ENCODE measurements at regions of chr5 and their contacts with region 1.

Region 1: DNA sequence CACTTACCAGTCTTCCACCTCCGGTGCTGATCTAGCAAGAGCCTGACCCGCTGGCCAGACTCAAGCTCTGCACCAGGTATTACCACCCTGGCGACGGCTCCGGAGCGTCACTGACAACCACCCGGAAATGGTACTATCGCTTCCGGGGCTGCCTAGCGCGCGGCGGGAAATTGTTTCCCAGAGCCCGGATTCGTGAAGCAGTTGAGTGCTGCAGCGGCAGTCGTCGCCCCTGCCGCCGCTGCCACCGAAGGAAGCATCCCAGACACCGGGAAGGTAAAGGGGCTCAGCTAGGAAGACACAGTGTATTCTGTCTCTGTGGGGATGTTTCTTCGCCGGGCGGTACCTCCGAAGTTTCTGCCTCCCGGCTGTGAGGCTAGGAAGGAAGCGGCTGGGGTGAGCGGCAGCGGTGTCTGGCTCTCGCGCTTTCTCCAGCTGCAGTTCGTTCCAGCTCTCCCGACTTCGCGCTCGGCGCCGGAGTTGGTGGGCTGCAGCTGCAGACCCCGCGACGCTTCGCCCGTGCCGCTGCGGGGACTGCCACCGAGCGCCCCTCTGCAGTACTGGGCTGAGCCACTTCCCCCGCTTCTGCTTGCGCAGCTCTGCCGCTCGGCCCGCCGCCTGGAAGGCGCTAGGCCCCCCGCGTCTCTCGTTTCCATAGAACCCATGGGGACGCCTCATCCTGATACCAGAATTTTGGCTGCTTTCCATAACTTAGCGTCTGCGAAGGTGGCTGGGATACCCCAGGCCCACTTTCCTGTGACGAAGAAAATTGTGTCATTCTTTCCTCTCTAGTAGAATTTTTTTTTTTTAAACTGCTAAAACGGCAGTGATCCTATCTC is at the starts of genes KIAA0825 and SLF1:
- DNase-seq: peak; percentile 69 to 86 (median 83)
- ATAC-seq: peak; percentile 94
- H3K4me3 ChIP-seq: peak within 1 kb of the TSS; percentile 79
- H3K4me3 Mint-ChIP-seq: peak within 1 kb of the TSS; percentile 92 to 99 (median 96)
- H3K27ac ChIP-seq: peak within 1 kb of the TSS; percentile 63
- H3K27ac Mint-ChIP-seq: peak within 1 kb of the TSS; percentile 30 to 96 (median 89)
- H3K4me1 ChIP-seq: peaks cover 6 to 10% of the 10 kb centered on the region in 2 donors
- H3K4me1 Mint-ChIP-seq: peaks cover 18 to 47% (median 43%) of the 10 kb centered on the region in 7 donors
- H3K27me3 ChIP-seq: no peaks in the 10 kb centered on the region
- H3K27me3 Mint-ChIP-seq: no peaks in the 10 kb centered on the region
- total RNA-seq, gene KIAA0825: 1.2 to 3.2 (median 1.5) TPM
- total RNA-seq, gene SLF1: 6.7 to 13.4 (median 11.3) TPM

Region 2: DNA sequence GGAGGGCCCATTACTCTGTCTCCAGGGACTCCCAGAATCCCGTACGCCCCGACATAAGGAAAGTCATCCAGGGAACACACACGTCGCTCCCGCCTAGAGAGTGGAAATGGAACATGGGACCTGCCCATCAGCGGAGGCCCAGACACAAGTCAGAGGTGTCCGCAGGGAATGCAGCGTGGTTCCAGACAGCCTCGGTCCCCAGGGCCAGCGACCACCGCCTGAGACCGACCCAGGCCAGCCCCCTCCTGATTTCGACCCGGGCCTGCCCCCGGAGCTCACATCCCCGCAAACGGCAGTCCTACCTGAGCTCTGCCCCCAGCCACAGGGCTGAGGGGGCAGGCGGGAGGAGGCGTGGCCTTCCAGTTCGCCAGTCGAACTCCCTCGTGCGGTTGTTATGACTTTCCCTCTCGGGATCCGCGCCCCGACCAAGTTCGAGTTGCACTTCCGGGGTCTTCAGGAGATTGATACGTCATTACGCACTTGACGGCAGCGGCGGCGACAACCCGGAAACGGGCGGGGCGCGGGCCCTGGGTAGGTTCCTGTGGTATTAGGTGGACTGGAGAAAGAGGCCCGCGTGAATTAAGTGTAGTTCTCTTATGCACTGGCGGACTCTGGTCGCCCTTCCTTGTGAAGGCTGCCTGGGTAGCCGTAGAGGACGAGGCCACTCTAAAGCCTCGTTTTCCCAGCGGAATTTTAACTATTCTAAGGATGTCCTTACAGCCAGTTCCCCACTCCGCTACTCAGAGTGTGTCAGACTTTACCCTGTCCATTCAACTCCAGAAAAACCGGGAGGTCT is 507.3 kb before region 1 on chr5:
- CTCF ChIA-PET with region 1: no interaction called
- POLR2A ChIA-PET with region 1: no interaction called
- intact Hi-C with region 1: loop called (anchors 1 kb)
- DNase-seq: peak; percentile 77 to 93 (median 90)
- ATAC-seq: peak; percentile 96
- H3K4me3 ChIP-seq: peak overlapping the region; percentile 90
- H3K4me3 Mint-ChIP-seq: peak overlapping the region; percentile 88 to 97 (median 95)
- H3K27ac ChIP-seq: peak overlapping the region; percentile 85
- H3K27ac Mint-ChIP-seq: peak overlapping the region; percentile 93 to 97 (median 96)
- H3K4me1 ChIP-seq: peaks cover 8 to 10% of the 10 kb centered on the region in 2 donors
- H3K4me1 Mint-ChIP-seq: peaks cover 21 to 50% (median 47%) of the 10 kb centered on the region in 7 donors
- H3K27me3 ChIP-seq: no peaks in the 10 kb centered on the region
- H3K27me3 Mint-ChIP-seq: peaks cover 0 to 15% (median 14%) of the 10 kb centered on the region in 5 donors

Region 3: GRCh38 chr5:94153736-94154450 is 464.8 kb before region 1 on chr5:
- CTCF ChIA-PET with region 1: no interaction called
- POLR2A ChIA-PET with region 1: no interaction called
- intact Hi-C with region 1: no loop called
- DNase-seq: no peak
- ATAC-seq: no peak
- H3K4me3 ChIP-seq: no peak overlapping the region
- H3K4me3 Mint-ChIP-seq: no peak overlapping the region
- H3K27ac ChIP-seq: no peak overlapping the region
- H3K27ac Mint-ChIP-seq: no peak overlapping the region
- H3K4me1 ChIP-seq: no peaks in the 10 kb centered on the region
- H3K4me1 Mint-ChIP-seq: no peaks in the 10 kb centered on the region
- H3K27me3 ChIP-seq: no peaks in the 10 kb centered on the region
- H3K27me3 Mint-ChIP-seq: peaks cover 0 to 3% (median 0%) of the 10 kb centered on the region in 5 donors

Region 4: DNA sequence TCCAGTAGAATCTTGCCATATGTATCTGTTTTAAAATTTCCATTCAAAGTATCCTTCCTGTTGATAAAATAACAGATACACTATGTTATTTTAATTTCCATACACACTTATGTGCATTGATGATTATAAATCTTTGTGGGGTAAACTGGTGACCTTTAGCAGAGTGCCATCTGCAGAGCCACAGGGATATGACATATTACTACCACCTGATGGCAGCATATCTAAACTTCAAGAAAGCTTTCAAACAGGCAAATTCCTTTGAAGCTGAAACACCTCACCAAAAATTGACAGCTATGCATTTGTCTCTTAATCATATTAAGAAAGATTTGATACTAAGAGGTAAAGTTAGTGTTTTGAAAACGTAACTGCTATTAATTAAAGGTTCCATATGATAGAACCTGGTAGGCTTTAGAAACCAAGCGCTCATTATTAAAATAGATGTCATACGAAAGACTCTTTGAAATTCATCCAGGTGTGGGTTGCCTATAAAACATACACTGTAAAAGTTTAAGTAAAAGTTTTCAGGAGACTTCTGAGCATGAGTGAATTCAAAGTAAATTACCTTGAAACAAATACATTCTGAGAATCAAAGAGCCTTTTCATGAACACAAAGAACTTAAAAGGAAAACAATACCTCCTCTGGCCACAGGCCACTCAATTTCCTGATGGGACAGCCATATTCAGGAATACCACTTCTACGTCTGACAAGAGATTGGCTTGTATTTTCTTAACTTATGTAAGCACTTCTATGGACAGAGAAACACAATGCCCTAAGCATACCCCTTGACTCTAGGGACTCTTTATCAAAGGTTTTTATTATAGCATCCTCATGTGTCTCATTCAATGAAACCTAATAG is 93.6 kb before region 1 on chr5:
- CTCF ChIA-PET with region 1: no interaction called
- POLR2A ChIA-PET with region 1: no interaction called
- intact Hi-C with region 1: loop called (anchors 2 kb)
- DNase-seq: peak in 7 of 9 donors; percentile 2 to 43 (median 27)
- ATAC-seq: peak; percentile 66
- H3K4me3 ChIP-seq: no peak overlapping the region
- H3K4me3 Mint-ChIP-seq: no peak overlapping the region
- H3K27ac ChIP-seq: no peak overlapping the region
- H3K27ac Mint-ChIP-seq: no peak overlapping the region
- H3K4me1 ChIP-seq: no peaks in the 10 kb centered on the region
- H3K4me1 Mint-ChIP-seq: peaks cover 0 to 3% (median 0%) of the 10 kb centered on the region in 7 donors
- H3K27me3 ChIP-seq: no peaks in the 10 kb centered on the region
- H3K27me3 Mint-ChIP-seq: peaks cover 0 to 5% (median 0%) of the 10 kb centered on the region in 5 donors

Region 5: GRCh38 chr5:94577466-94578245 is 41.1 kb before region 1 on chr5:
- CTCF ChIA-PET with region 1: no interaction called
- POLR2A ChIA-PET with region 1: no interaction called
- intact Hi-C with region 1: loop called in 1 of 2 experiments (anchors 2 kb)
- DNase-seq: peak in 2 of 9 donors; percentile 15 to 23
- ATAC-seq: peak; percentile 62
- H3K4me3 ChIP-seq: no peak overlapping the region
- H3K4me3 Mint-ChIP-seq: peak overlapping the region in 2 of 10 donors; percentile 48 to 84
- H3K27ac ChIP-seq: no peak overlapping the region
- H3K27ac Mint-ChIP-seq: peak overlapping the region in 1 of 9 donors; percentile 77
- H3K4me1 ChIP-seq: peaks cover 0 to 62% of the 10 kb centered on the region in 2 donors
- H3K4me1 Mint-ChIP-seq: peaks cover 8 to 55% (median 18%) of the 10 kb centered on the region in 7 donors
- H3K27me3 ChIP-seq: no peaks in the 10 kb centered on the region
- H3K27me3 Mint-ChIP-seq: no peaks in the 10 kb centered on the region

Region 6: DNA sequence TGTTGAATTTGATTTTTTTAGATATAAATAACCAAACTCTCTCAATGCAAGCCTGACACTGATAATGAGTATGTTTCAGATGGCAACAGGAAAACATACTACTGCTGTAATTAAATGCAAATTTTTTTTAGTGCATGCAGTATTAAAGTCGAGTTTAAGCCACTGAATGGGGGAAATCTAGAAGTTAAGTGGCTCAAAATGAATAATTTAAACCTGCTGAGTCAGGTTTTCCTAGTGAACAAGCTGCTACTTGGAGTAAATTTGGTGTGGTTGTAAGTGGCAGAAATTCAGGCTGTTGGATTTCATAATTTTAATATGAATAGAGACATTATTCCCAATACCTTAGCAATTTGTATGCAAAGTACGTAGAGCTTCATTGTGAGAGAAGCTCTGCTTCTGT is 121.6 kb after region 1 on chr5:
- CTCF ChIA-PET with region 1: no interaction called
- POLR2A ChIA-PET with region 1: no interaction called
- intact Hi-C with region 1: loop called (anchors 5 kb)
- DNase-seq: no peak
- ATAC-seq: no peak
- H3K4me3 ChIP-seq: no peak overlapping the region
- H3K4me3 Mint-ChIP-seq: no peak overlapping the region
- H3K27ac ChIP-seq: no peak overlapping the region
- H3K27ac Mint-ChIP-seq: no peak overlapping the region
- H3K4me1 ChIP-seq: no peaks in the 10 kb centered on the region
- H3K4me1 Mint-ChIP-seq: peaks cover 0 to 2% (median 0%) of the 10 kb centered on the region in 7 donors
- H3K27me3 ChIP-seq: no peaks in the 10 kb centered on the region
- H3K27me3 Mint-ChIP-seq: peaks cover 0 to 9% (median 3%) of the 10 kb centered on the region in 5 donors

Region 7: DNA sequence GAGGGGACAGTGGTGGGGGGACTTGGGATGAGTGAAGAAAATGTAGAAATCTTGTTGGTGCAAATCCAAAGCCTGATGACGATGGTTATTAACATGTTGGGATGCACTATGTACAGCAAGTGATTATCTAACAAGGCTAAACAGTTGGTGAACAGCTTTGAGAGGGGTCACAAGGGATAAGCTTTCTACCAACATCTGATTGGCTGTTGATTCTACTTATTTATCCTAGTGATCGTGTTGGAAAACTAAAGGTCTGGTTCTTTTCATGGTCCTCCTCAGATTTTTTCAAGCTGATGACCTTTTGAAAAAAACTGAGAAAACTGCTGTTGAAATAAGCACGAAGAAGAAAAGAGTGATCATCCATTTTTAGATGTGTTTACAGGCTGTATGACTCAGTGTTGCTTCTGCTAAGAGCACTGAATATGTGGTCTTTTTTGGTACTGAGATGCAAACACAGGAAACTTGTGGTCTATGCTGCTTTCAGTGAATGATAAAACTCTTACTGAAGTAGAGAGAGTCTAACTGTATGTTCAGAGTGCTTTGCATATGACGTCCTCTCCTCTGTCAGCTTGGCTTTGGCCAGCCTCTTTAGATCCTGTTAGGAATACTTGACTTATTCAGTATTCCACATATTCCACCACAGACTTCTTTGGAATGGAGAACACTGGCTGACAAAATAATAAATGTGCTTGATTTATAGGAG is 174.6 kb after region 1 on chr5:
- CTCF ChIA-PET with region 1: no interaction called
- POLR2A ChIA-PET with region 1: no interaction called
- intact Hi-C with region 1: loop called (anchors 2 to 10 kb)
- DNase-seq: peak in 6 of 9 donors; percentile 14 to 53 (median 30)
- ATAC-seq: peak; percentile 95
- H3K4me3 ChIP-seq: no peak overlapping the region
- H3K4me3 Mint-ChIP-seq: peak overlapping the region in 8 of 10 donors; percentile 17 to 74 (median 37)
- H3K27ac ChIP-seq: peak overlapping the region; percentile 24
- H3K27ac Mint-ChIP-seq: peak overlapping the region; percentile 22 to 97 (median 80)
- H3K4me1 ChIP-seq: peaks cover 16 to 29% of the 10 kb centered on the region in 2 donors
- H3K4me1 Mint-ChIP-seq: peaks cover 13 to 49% (median 35%) of the 10 kb centered on the region in 7 donors
- H3K27me3 ChIP-seq: no peaks in the 10 kb centered on the region
- H3K27me3 Mint-ChIP-seq: peaks cover 0 to 10% (median 0%) of the 10 kb centered on the region in 5 donors

Region 8: GRCh38 chr5:95022967-95023695 is 404.4 kb after region 1 on chr5:
- CTCF ChIA-PET with region 1: no interaction called
- POLR2A ChIA-PET with region 1: no interaction called
- intact Hi-C with region 1: no loop called
- DNase-seq: no peak
- ATAC-seq: peak; percentile 70
- H3K4me3 ChIP-seq: no peak overlapping the region
- H3K4me3 Mint-ChIP-seq: no peak overlapping the region
- H3K27ac ChIP-seq: no peak overlapping the region
- H3K27ac Mint-ChIP-seq: no peak overlapping the region
- H3K4me1 ChIP-seq: no peaks in the 10 kb centered on the region
- H3K4me1 Mint-ChIP-seq: peaks cover 7 to 14% (median 9%) of the 10 kb centered on the region in 7 donors
- H3K27me3 ChIP-seq: no peaks in the 10 kb centered on the region
- H3K27me3 Mint-ChIP-seq: peaks cover 0 to 6% (median 0%) of the 10 kb centered on the region in 5 donors